HAP-1 (cell line): ENCODE measurements at regions of chr20 and their contacts with region 1.

Region 1: DNA sequence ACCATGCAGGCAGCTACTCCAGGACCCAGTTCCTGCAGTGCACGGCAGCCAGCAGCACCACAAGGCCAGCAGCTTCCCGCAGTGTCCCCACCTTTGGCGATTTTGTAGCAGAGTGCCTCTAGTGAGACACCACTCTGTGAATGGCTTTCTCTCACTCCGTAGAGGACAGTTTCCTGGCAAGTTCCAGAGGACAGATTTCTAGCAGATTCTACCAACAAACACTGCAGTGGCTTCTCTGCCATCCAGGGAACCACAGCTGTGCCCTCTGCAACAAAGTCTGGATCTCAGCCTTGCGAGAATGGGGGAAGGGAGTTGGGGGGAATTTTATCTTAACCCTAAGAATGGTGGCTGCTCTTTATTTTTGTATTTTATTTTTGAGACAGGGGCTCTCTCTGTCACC is 28.7 kb downstream of the SNHG17 start:
- DNase-seq: no peak
- H3K4me3 ChIP-seq: no peak overlapping the region
- H3K4me1 ChIP-seq: no peaks in the 10 kb centered on the region
- H3K27me3 ChIP-seq: no peaks in the 10 kb centered on the region

Region 2: GRCh38 chr20:38221119-38221589 is 185.3 kb before region 1 on chr20:
- in situ Hi-C with region 1: loop called (anchors 10 kb)
- DNase-seq: peak; percentile 64 to 89
- H3K4me3 ChIP-seq: no peak overlapping the region
- H3K4me1 ChIP-seq: 0 out of 2 replicates have a peak, but pooled peaks cover 2% of the 10 kb centered on the region
- H3K27me3 ChIP-seq: no peaks in the 10 kb centered on the region